ENCODE measurements at regions of chr15 and their contacts with region 1.

Region 1: GRCh38 chr15:52658955-52659354 is 20.2 kb downstream of the ATOSA start:
- DNase-seq: no peak
- ATAC-seq: no peak
- H3K4me3 ChIP-seq: no peak overlapping the region
- H3K27ac ChIP-seq: peak overlapping the region in 1 of 2 donors; percentile 25
- H3K4me1 ChIP-seq: peaks cover 2 to 6% of the 10 kb centered on the region in 2 donors
- H3K27me3 ChIP-seq: no peaks in the 10 kb centered on the region

Region 2: GRCh38 chr15:52427804-52428203 is 231.2 kb before region 1 on chr15:
- intact Hi-C with region 1: no loop called
- DNase-seq: peak in 1 of 2 donors; percentile 55
- ATAC-seq: peak; percentile 52
- H3K4me3 ChIP-seq: no peak overlapping the region
- H3K27ac ChIP-seq: no peak overlapping the region
- H3K4me1 ChIP-seq: no peaks in the 10 kb centered on the region
- H3K27me3 ChIP-seq: no peaks in the 10 kb centered on the region

Region 3: DNA sequence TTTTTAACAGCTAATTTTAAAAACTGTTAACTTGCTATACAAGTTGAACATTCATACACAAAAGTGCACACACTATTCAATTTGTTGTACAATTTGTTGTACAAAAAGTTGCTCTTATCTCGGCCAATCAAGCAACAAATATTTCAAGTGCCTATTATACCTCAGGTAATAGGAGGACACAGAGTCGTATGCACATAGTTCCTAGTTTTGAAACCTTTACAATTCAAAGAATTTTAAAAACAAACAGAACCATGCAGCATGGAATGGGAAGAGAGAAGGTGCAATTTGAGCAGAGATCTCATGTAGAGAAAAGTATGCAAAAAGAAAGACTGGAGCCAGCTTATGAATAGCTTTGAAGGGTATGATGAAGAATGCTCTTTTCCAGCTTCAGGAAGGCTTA is 43.7 kb before region 1 on chr15:
- intact Hi-C with region 1: no loop called
- DNase-seq: no peak
- ATAC-seq: no peak
- H3K4me3 ChIP-seq: no peak overlapping the region
- H3K27ac ChIP-seq: no peak overlapping the region
- H3K4me1 ChIP-seq: peaks cover 0 to 2% of the 10 kb centered on the region in 2 donors
- H3K27me3 ChIP-seq: no peaks in the 10 kb centered on the region

Region 4: DNA sequence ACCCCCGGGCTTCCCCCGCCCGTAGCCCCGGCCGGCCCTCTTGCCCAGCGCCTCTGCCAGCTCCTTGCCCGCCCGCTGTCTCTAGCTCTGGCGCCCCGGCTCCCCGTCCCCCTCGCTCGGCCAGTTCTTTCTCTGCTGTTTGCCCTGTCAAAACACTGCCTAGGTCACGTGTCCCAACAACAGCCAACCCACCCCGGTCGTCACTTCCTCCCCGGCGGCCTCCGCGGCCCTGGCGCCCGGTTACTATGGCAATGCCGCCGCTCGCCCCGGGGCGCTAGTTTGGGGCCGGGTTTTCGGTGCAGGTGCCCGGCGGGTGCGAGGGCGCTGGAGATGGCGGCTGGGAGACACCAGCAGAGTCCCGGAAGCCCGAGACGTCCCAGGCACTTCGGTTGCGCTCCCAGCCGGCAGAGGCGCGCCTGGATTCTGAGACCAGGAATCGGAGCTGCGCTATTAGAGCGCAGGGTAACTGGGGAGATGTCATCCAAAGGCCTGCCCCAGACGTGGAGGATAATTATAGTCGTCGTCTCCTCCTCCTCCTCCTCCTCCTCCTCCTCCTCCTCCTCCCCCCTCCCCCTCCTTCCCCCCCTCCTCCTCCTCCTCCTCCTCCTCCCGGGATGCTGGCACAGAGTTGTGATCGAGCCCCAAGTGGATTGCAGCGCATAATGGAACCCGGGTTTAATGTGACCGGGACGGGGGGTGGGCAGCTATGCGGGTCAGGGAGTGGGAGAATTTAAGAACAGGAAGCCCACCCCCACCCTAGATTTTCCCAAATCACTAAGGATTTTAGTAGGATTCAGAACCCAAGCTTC is 20.5 kb after region 1 on chr15 and contains the start of gene ATOSA:
- intact Hi-C with region 1: loop called in 1 of 2 experiments (anchors 2 kb)
- DNase-seq: peak; percentile 95 to 97
- ATAC-seq: peak; percentile 96
- H3K4me3 ChIP-seq: peak within 1 kb of the TSS; percentile 36 to 74
- H3K27ac ChIP-seq: peak within 1 kb of the TSS; percentile 62 to 71
- H3K4me1 ChIP-seq: no peaks in the 10 kb centered on the region
- H3K27me3 ChIP-seq: no peaks in the 10 kb centered on the region
- total RNA-seq, gene ATOSA: 38.6 to 48.0 TPM